ENCODE measurements at regions of chr5 and their contacts with region 1.

Region 1: GRCh38 chr5:173887610-173888472 is at the start of gene CPEB4:
- DNase-seq: peak; percentile 96 to 98
- H3K4me3 ChIP-seq: peak within 1 kb of the TSS; percentile 86
- H3K27ac ChIP-seq: peak within 1 kb of the TSS; percentile 84
- H3K4me1 ChIP-seq: peaks cover 66% of the 10 kb centered on the region
- H3K27me3 ChIP-seq: no peaks in the 10 kb centered on the region
- CTCF ChIP-seq: no peak
- total RNA-seq, gene CPEB4: 11.6 and 15.4 TPM in 2 replicates

Region 2: DNA sequence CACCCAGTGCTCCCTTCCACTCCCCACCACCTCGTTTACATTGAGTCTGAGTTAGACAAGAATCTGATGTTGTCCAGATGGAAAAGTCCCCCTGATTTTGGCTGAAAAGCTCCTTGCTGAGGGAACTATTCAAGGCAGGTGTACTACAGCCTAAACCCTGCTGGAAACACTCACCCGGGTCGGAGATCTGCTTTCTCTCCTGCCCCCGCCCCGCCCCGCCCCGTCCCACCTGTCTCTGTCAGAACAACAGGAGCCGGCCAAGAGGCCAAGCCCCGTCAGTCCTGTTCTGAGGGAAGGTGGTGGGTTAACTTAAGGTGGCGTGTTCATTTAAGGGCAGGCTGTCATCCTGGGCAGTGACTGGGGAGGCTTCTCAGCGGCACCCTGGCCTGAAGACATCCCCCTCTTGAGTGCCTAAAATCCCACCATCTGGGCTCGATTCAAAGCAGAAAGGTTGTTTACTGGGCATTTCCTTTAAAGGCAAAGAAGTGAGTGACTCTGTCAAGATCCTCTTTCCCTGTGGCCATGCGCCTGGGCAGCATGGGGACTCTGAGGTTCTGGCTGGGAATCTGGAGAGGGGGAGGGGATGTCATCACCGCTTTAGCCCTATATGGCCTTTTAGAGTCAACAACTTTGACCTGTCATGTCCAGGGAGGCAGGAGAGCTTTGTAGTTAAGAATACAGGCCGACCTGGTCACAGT is 1317.8 kb before region 1 on chr5:
- CTCF ChIA-PET with region 1: no interaction called
- POLR2A ChIA-PET with region 1: no interaction called
- intact Hi-C with region 1: loop called (anchors 5 kb)
- DNase-seq: no peak
- H3K4me3 ChIP-seq: no peak overlapping the region
- H3K27ac ChIP-seq: no peak overlapping the region
- H3K4me1 ChIP-seq: no peaks in the 10 kb centered on the region
- H3K27me3 ChIP-seq: peaks cover 48% of the 10 kb centered on the region
- CTCF ChIP-seq: no peak

Region 3: GRCh38 chr5:173472141-173472543 is 415.7 kb before region 1 on chr5:
- CTCF ChIA-PET with region 1: no interaction called
- POLR2A ChIA-PET with region 1: interaction called, 12 read pairs
- intact Hi-C with region 1: no loop called
- DNase-seq: peak; percentile 44 to 87
- H3K4me3 ChIP-seq: no peak overlapping the region
- H3K27ac ChIP-seq: peak overlapping the region; percentile 48
- H3K4me1 ChIP-seq: peaks cover 21% of the 10 kb centered on the region
- H3K27me3 ChIP-seq: no peaks in the 10 kb centered on the region
- CTCF ChIP-seq: no peak

Region 4: GRCh38 chr5:173764321-173765029 is 123.4 kb before region 1 on chr5:
- CTCF ChIA-PET with region 1: no interaction called
- POLR2A ChIA-PET with region 1: interaction called, 10 read pairs
- intact Hi-C with region 1: loop called (anchors 1 kb)
- DNase-seq: peak; percentile 89 to 95
- H3K4me3 ChIP-seq: no peak overlapping the region
- H3K27ac ChIP-seq: peak overlapping the region; percentile 91
- H3K4me1 ChIP-seq: peaks cover 46% of the 10 kb centered on the region
- H3K27me3 ChIP-seq: no peaks in the 10 kb centered on the region
- CTCF ChIP-seq: no peak

Region 5: DNA sequence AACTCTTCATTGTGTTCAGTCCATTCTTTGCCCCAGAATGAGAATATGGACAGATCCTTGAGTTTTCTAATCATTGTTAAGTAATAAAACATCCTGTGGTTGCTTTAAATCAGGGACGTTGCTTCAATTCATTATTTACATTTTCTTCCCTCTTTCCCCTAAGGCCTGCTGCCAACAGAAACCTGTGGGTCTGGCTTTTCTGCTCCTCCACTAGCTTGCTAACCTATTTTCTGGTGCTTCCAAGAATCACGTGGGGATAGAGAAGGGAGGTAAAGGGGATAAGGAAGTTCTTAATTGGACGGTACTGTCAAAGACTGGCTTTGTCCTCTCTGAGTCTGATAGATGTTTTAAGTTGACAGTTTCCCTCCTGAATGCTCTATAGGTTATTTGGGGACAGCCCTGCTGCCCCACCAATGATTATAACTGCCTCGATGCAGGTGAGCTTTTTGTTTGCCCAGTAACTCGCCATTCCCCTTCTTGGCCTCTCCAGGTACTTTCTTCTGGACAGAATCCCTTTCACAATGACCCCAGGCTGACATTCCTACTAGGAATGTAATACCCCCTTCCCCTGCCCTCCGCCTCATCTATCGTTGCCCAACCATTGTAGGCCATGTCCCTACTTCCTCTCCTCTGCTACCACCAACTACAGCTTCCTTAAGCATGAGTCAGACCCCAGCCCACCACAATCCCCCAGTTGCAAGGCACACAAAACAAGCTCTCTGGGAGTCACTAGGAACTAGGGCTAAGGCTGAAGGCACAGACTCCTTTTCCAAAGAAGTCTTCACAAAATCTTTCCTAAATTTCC is 19.6 kb before region 1 on chr5:
- CTCF ChIA-PET with region 1: interaction called, 4 read pairs
- POLR2A ChIA-PET with region 1: interaction called, 4 read pairs
- intact Hi-C with region 1: loop called (anchors 1 kb)
- DNase-seq: peak; percentile 72 to 96
- H3K4me3 ChIP-seq: peak overlapping the region; percentile 35; the same call in 1 of the 2 replicates
- H3K27ac ChIP-seq: peak overlapping the region; percentile 84
- H3K4me1 ChIP-seq: peaks cover 61% of the 10 kb centered on the region
- H3K27me3 ChIP-seq: no peaks in the 10 kb centered on the region
- CTCF ChIP-seq: no peak

Region 6: GRCh38 chr5:173925448-173926071 is 37.7 kb after region 1 on chr5:
- CTCF ChIA-PET with region 1: interaction called, 9 read pairs
- POLR2A ChIA-PET with region 1: interaction called, 12 read pairs
- intact Hi-C with region 1: no loop called
- DNase-seq: peak in 1 of 2 experiments; percentile 47
- H3K4me3 ChIP-seq: no peak overlapping the region
- H3K27ac ChIP-seq: no peak overlapping the region
- H3K4me1 ChIP-seq: peaks cover 7% of the 10 kb centered on the region
- H3K27me3 ChIP-seq: no peaks in the 10 kb centered on the region
- CTCF ChIP-seq: peak; percentile 68

Measured in PC-9 (cell line).